ENCODE measurements at regions of chr6 and their contacts with region 1.

Region 1: GRCh38 chr6:21664314-21665109 is 71.0 kb downstream of the SOX4 start:
- DNase-seq: peak; percentile 39 to 65 (median 48)
- ATAC-seq: peak in 3 of 4 donors; percentile 57 to 67 (median 61)
- H3K4me3 ChIP-seq: peak overlapping the region; percentile 46 to 69 (median 56)
- H3K27ac ChIP-seq: peak overlapping the region in 9 of 12 donors; percentile 20 to 62 (median 52)
- H3K4me1 ChIP-seq: peaks cover 0 to 39% (median 17%) of the 10 kb centered on the region in 12 donors
- H3K27me3 ChIP-seq: peaks cover 0 to 53% (median 24%) of the 10 kb centered on the region in 9 donors
- CTCF ChIP-seq: no peak
- POLR2A ChIP-seq: no peak

Region 2: DNA sequence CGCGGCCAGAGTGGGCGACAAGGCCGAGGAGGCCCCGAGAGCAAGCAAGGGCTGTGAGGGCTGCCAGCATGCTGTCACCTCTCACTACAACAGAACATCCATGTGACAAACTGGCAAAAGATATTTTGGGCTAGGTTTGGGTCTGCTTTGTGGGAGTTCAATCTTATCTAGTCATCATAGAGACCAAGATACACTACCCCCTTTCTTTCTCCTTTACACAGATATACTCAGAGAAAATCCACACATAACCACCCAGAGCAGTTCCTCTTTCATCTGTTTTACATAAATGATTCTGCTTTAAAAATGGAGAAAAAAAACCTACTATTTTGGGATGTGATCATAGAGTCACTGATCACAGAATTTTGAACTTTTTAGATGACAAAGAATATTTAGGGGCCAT is 54.2 kb before region 1 on chr6:
- intact Hi-C with region 1: no loop called
- DNase-seq: no peak
- ATAC-seq: no peak
- H3K4me3 ChIP-seq: no peak overlapping the region
- H3K27ac ChIP-seq: no peak overlapping the region
- H3K4me1 ChIP-seq: no peaks in the 10 kb centered on the region
- H3K27me3 ChIP-seq: no peaks in the 10 kb centered on the region
- CTCF ChIP-seq: no peak
- POLR2A ChIP-seq: no peak

Region 3: DNA sequence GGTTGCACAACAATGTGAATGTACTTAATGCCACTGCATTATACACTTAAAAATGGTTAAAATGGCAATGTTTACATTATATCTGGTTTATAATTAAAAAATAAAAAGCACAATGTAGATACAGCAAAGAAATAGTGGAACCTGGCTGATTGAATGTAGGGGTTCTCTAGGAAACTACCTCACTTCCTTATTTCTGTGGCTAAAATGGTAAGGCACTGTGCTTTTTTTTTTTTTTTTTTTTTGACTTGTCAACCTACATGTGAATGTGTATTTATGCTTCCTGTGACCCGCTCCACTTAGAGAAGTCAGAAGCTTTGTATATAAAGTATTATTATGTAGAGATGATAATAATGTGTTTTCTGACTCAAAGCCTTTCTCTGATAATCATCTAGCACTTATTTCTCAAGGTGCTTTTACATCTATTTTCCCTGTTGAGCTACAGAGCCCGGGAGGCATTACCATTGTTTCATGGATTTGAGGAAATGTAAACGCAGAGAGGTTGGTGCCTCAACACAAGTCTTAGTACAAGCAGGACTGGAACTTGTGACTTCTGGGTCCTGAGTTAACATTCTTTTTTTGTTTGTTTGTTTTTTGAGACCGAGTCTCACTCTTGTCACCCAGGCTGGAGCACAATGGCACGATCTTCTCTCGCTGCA is 15.9 kb before region 1 on chr6:
- intact Hi-C with region 1: loop called in 1 of 10 experiments (anchors 1 kb)
- DNase-seq: no peak
- ATAC-seq: no peak
- H3K4me3 ChIP-seq: no peak overlapping the region
- H3K27ac ChIP-seq: no peak overlapping the region
- H3K4me1 ChIP-seq: no peaks in the 10 kb centered on the region
- H3K27me3 ChIP-seq: no peaks in the 10 kb centered on the region
- CTCF ChIP-seq: no peak
- POLR2A ChIP-seq: no peak

Region 4: GRCh38 chr6:21740376-21741124 is 76.0 kb after region 1 on chr6:
- intact Hi-C with region 1: loop called in 1 of 10 experiments (anchors 2 kb)
- DNase-seq: no peak
- ATAC-seq: no peak
- H3K4me3 ChIP-seq: peak overlapping the region in 2 of 12 donors; percentile 1 to 15
- H3K27ac ChIP-seq: peak overlapping the region in 3 of 12 donors; percentile 19 to 44 (median 38)
- H3K4me1 ChIP-seq: peaks cover 0 to 26% (median 13%) of the 10 kb centered on the region in 12 donors
- H3K27me3 ChIP-seq: no peaks in the 10 kb centered on the region
- CTCF ChIP-seq: no peak
- POLR2A ChIP-seq: no peak

Region 5: DNA sequence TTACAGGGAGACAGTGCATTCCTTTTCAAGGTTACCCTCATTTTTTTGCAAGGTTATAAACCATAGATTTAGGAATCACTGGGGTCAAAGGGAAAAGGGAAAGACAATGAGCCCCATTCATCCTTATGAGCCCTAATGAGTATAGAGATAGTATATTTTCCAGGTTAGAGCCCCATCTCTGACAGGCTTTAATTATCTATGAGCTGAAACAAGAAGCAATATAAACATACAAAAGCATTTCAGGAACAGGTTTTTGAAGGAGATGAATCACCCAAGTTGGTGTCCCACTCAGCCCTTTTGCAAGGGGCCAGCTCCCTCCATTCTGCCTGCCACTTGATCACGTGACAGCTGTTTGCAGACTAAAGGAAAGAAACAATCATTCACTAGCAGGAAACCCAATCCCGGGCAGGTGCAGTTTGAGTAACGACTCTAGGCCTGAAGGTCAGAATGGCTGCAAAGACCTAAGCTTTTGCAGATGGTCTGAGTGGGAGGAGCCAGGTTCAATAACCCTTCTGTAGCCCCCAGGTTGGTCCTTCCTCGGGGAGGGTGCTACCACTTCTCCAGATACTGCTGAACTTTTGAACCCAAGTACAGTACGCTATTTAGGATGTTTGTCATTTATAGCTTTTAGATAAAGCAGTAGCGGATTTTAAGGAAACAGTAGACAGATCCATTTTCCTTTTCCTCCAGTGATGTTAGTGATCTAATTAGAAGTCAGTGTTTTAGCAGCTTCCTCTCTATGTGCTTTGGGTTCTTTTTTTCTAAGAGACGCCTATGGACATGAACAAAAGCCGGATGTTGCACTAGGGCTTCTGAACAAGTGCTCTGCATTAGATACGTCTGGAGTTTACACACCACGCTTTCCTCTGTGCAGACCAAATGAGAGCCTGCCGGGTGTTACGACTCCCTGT is 182.3 kb after region 1 on chr6:
- intact Hi-C with region 1: loop called in 1 of 10 experiments (anchors 10 kb)
- DNase-seq: peak in 2 of 5 donors; percentile 27 to 35
- ATAC-seq: peak in 3 of 4 donors; percentile 51 to 85 (median 66)
- H3K4me3 ChIP-seq: no peak overlapping the region
- H3K27ac ChIP-seq: peak overlapping the region in 9 of 12 donors; percentile 4 to 44 (median 24)
- H3K4me1 ChIP-seq: peaks cover 6 to 54% (median 45%) of the 10 kb centered on the region in 12 donors
- H3K27me3 ChIP-seq: no peaks in the 10 kb centered on the region
- CTCF ChIP-seq: no peak
- POLR2A ChIP-seq: no peak

Region 6: DNA sequence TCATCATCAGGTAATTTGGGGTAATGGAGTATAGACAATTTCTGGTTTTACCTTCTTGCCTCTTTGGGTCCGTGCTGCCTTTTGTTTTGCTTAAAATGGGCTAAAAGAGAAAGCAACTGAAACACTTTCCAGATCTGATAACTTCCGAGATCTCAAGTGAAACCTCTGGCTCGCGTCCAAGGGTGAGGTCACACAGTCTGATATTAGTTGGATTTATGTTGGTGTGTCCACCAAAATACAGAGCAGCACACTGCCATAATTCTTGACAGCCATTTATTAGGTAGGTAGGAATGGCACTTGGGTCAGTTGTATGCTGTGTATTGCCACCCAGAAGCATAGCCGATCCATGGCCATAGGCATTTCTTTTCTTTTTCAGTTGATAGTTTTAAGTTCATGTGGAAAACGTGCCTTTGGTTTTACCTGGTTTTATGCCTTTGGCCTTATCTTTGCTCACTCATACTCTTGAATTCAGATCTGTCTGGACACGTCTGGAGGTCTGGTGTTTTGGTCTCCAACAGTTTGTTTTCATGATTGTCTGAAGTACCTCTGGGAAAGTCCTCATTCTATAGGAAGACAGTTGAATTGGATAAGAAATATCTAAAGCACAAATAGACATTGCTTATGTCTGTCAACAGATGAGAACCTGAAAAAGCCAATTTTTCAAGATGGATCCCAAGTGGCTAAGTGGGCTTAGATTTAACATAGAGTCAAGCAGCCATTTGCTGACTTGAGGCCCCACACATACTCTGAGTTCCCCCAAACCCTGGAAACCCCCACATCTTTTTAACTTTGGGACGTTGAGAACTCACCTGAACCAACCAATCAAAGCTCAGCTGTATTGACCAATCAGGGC is 249.8 kb after region 1 on chr6:
- intact Hi-C with region 1: loop called in 1 of 10 experiments (anchors 10 kb)
- DNase-seq: peak; percentile 65 to 78 (median 75)
- ATAC-seq: peak in 1 of 4 donors; percentile 65
- H3K4me3 ChIP-seq: peak overlapping the region in 6 of 12 donors; percentile 4 to 35 (median 12)
- H3K27ac ChIP-seq: peak overlapping the region in 1 of 12 donors; percentile 7
- H3K4me1 ChIP-seq: peaks cover 0 to 27% (median 1%) of the 10 kb centered on the region in 12 donors
- H3K27me3 ChIP-seq: no peaks in the 10 kb centered on the region
- CTCF ChIP-seq: no peak
- POLR2A ChIP-seq: no peak

Region 7: GRCh38 chr6:21922086-21922485 is 257.6 kb after region 1 on chr6:
- intact Hi-C with region 1: loop called in 2 of 10 experiments (anchors 10 kb)
- DNase-seq: no peak
- ATAC-seq: no peak
- H3K4me3 ChIP-seq: no peak overlapping the region
- H3K27ac ChIP-seq: no peak overlapping the region
- H3K4me1 ChIP-seq: peaks cover 0 to 12% (median 0%) of the 10 kb centered on the region in 12 donors
- H3K27me3 ChIP-seq: no peaks in the 10 kb centered on the region
- CTCF ChIP-seq: no peak
- POLR2A ChIP-seq: no peak